CD4-positive, alpha-beta T cell (primary cell): ENCODE measurements at regions of chr17 and their contacts with region 1.

Region 1: GRCh38 chr17:57995076-57995956 is 7.3 kb upstream of the VEZF1 start:
- DNase-seq: peak; percentile 27 to 81 (median 41)
- ATAC-seq: peak; percentile 89
- H3K4me3 ChIP-seq: no peak overlapping the region
- H3K4me3 Mint-ChIP-seq: peak overlapping the region; percentile 25
- H3K27ac ChIP-seq: peak overlapping the region; percentile 9 to 12
- H3K27ac Mint-ChIP-seq: peak overlapping the region; percentile 37
- H3K4me1 ChIP-seq: peaks cover 15% of the 10 kb centered on the region
- H3K4me1 Mint-ChIP-seq: peaks cover 56% of the 10 kb centered on the region
- H3K27me3 ChIP-seq: no peaks in the 10 kb centered on the region
- H3K27me3 Mint-ChIP-seq: no peaks in the 10 kb centered on the region
- CTCF ChIP-seq: peak; percentile 73

Region 2: DNA sequence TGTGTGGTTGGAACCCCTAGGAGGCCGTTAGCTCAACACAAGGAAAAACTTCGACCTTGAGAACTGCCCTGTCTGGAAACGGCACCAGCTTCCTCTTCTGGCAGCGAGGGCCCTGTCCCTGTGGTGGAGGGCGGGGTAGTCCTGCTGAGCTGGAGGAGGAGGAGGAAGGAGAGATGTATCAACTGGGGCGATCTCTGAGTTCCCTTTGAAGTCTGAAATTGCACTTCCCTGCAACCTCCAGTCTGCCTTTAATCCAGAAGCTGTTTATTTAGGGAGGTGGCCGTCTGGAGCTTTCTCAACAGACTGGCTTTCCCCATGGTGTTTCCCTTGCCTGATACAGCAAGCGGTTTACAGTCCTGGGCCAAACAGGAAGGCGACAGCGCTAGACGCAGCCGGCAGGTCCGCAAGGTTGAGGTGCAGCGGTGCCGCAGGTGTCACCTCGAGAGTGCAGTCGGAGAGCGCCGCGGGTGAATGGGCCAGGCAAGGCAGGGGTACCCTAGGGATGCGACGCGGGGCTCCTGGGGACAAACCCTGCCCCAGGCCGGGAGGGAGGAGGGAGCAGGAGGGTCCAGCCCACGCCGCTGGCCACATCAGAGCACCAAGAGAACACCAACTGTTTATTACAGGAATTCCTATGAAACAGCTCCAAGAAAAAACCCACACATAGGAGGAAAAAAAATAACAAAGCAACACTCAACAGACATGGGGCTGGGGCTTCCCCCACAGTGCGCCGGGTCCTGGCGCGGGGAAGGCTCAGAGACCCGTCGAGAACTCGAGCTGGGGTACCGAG is 134.1 kb before region 1 on chr17:
- CTCF ChIA-PET with region 1: interaction called, 11 read pairs
- POLR2A ChIA-PET with region 1: interaction called, 3 read pairs
- intact Hi-C with region 1: loop called (anchors 2 kb)
- DNase-seq: peak in 12 of 14 experiments; percentile 19 to 75 (median 42)
- ATAC-seq: peak; percentile 74
- H3K4me3 ChIP-seq: peak overlapping the region; percentile 52
- H3K4me3 Mint-ChIP-seq: peak overlapping the region; percentile 89
- H3K27ac ChIP-seq: no peak overlapping the region
- H3K27ac Mint-ChIP-seq: no peak overlapping the region
- H3K4me1 ChIP-seq: peaks cover 21% of the 10 kb centered on the region
- H3K4me1 Mint-ChIP-seq: peaks cover 10% of the 10 kb centered on the region
- H3K27me3 ChIP-seq: peaks cover 10 to 14% of the 10 kb centered on the region in 2 experiments
- H3K27me3 Mint-ChIP-seq: peaks cover 14% of the 10 kb centered on the region
- CTCF ChIP-seq: no peak

Region 3: DNA sequence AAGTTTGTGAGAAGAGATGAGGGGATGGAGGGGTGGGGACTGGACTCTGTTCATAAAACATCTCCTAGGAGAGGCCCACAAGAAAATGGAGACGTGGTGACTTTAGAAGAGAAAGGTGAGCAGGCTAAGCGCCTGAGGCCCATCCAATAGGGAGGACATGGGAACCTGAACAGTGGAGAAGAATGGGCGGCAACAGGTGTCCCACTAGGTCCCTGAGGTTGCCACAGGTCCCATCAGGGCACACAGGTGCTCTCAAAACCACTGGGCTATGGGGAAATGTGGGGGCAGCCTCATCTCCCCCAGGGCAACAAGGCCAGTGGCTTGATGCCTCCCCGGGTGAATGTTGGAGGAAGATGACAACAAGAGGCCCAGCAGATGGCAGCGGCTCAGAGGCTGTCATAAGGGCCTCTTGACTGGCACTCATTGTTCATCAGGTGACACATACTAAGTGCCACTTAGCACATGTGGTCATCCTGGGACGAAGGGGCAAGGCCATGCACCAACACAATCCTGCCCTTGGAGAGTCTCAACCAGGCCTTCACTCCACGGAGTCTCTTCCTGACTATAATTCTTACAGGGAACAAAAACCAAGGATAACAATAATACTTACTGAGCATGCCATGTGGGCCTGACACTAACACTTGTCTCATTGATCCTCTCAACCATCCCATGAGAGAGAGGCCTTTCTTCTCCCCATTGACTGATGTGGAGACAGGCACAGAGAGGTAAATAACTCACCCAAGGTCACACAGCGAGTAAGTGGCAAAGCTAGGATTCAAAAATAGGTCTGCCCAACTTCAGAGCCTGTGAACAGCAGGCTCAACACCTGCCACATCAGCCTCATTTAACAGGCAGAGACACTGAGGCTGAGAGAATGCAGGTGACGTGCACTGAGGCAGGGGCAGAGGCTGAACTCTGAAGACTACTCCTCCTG is 78.1 kb before region 1 on chr17:
- CTCF ChIA-PET with region 1: interaction called, 3 read pairs
- POLR2A ChIA-PET with region 1: interaction called, 6 read pairs
- intact Hi-C with region 1: loop called (anchors 2 kb)
- DNase-seq: peak in 11 of 14 experiments; percentile 10 to 68 (median 24)
- ATAC-seq: no peak
- H3K4me3 ChIP-seq: no peak overlapping the region
- H3K4me3 Mint-ChIP-seq: no peak overlapping the region
- H3K27ac ChIP-seq: no peak overlapping the region
- H3K27ac Mint-ChIP-seq: no peak overlapping the region
- H3K4me1 ChIP-seq: no peaks in the 10 kb centered on the region
- H3K4me1 Mint-ChIP-seq: no peaks in the 10 kb centered on the region
- H3K27me3 ChIP-seq: no peaks in the 10 kb centered on the region
- H3K27me3 Mint-ChIP-seq: no peaks in the 10 kb centered on the region
- CTCF ChIP-seq: no peak

Region 4: DNA sequence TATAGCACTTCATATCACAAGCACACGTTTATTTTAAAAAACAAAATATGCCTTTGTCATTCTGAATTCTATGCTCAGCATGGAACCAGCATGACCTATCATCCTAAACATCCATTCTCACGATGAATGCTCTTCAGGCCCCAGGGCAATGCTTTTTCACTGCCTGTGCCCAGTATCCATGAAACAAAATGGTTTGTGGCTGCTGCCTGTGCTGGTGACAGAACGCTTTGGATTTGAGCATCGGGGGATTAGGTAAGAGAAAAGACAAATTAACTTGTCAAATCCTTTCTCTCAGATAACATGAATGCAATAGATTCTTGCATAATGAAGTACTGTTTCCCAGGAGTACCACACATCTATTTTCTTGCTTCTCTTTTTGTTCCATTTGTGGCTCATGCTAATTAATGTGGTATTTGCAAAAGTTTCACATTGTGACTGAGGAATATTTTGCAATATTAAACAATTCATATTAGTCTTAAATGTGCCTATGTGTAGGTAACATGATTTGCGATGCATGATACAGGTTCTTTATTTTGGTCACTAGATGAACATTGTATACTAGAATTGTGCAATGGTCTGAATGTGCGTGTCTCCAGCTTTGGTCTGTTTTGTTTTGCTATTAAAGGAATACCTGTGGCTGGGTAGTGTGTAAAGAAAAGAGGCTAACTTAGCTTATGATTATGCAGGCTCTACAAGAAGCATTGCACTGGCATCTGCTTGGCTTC is 37.5 kb after region 1 on chr17:
- CTCF ChIA-PET with region 1: no interaction called
- POLR2A ChIA-PET with region 1: no interaction called
- intact Hi-C with region 1: no loop called
- DNase-seq: no peak
- ATAC-seq: no peak
- H3K4me3 ChIP-seq: no peak overlapping the region
- H3K4me3 Mint-ChIP-seq: no peak overlapping the region
- H3K27ac ChIP-seq: no peak overlapping the region
- H3K27ac Mint-ChIP-seq: no peak overlapping the region
- H3K4me1 ChIP-seq: no peaks in the 10 kb centered on the region
- H3K4me1 Mint-ChIP-seq: no peaks in the 10 kb centered on the region
- H3K27me3 ChIP-seq: peaks cover 0 to 4% of the 10 kb centered on the region in 2 experiments
- H3K27me3 Mint-ChIP-seq: peaks cover 41% of the 10 kb centered on the region
- CTCF ChIP-seq: no peak

Region 5: GRCh38 chr17:58112970-58113631 is 117.8 kb after region 1 on chr17:
- CTCF ChIA-PET with region 1: interaction called, 5 read pairs
- POLR2A ChIA-PET with region 1: no interaction called
- intact Hi-C with region 1: loop called (anchors 2 kb)
- DNase-seq: peak; percentile 73 to 89 (median 86)
- ATAC-seq: peak; percentile 99
- H3K4me3 ChIP-seq: no peak overlapping the region
- H3K4me3 Mint-ChIP-seq: no peak overlapping the region
- H3K27ac ChIP-seq: no peak overlapping the region
- H3K27ac Mint-ChIP-seq: no peak overlapping the region
- H3K4me1 ChIP-seq: no peaks in the 10 kb centered on the region
- H3K4me1 Mint-ChIP-seq: no peaks in the 10 kb centered on the region
- H3K27me3 ChIP-seq: no peaks in the 10 kb centered on the region
- H3K27me3 Mint-ChIP-seq: peaks cover 4% of the 10 kb centered on the region
- CTCF ChIP-seq: peak; percentile 89

Region 6: GRCh38 chr17:58337600-58338453 is 342.5 kb after region 1 on chr17:
- CTCF ChIA-PET with region 1: no interaction called
- POLR2A ChIA-PET with region 1: no interaction called
- intact Hi-C with region 1: loop called in 1 of 2 experiments (anchors 10 kb)
- DNase-seq: peak; percentile 78 to 96 (median 88)
- ATAC-seq: peak; percentile 73
- H3K4me3 ChIP-seq: peak overlapping the region; percentile 84
- H3K4me3 Mint-ChIP-seq: peak overlapping the region; percentile 90
- H3K27ac ChIP-seq: peak overlapping the region; percentile 97 to 98
- H3K27ac Mint-ChIP-seq: peak overlapping the region; percentile 84
- H3K4me1 ChIP-seq: peaks cover 96% of the 10 kb centered on the region
- H3K4me1 Mint-ChIP-seq: peaks cover 92% of the 10 kb centered on the region
- H3K27me3 ChIP-seq: no peaks in the 10 kb centered on the region
- H3K27me3 Mint-ChIP-seq: no peaks in the 10 kb centered on the region
- CTCF ChIP-seq: no peak